ENCODE measurements at regions of chr19 and their contacts with region 1.

Region 1: GRCh38 chr19:47013041-47013517 is 6.6 kb upstream of the NPAS1 start:
- DNase-seq: peak; percentile 78
- H3K4me3 ChIP-seq: no peak overlapping the region
- H3K27ac ChIP-seq: no peak overlapping the region
- H3K4me1 ChIP-seq: peaks cover 11% of the 10 kb centered on the region
- H3K27me3 ChIP-seq: no peaks in the 10 kb centered on the region
- CTCF ChIP-seq: peak; percentile 93 to 98

Region 2: DNA sequence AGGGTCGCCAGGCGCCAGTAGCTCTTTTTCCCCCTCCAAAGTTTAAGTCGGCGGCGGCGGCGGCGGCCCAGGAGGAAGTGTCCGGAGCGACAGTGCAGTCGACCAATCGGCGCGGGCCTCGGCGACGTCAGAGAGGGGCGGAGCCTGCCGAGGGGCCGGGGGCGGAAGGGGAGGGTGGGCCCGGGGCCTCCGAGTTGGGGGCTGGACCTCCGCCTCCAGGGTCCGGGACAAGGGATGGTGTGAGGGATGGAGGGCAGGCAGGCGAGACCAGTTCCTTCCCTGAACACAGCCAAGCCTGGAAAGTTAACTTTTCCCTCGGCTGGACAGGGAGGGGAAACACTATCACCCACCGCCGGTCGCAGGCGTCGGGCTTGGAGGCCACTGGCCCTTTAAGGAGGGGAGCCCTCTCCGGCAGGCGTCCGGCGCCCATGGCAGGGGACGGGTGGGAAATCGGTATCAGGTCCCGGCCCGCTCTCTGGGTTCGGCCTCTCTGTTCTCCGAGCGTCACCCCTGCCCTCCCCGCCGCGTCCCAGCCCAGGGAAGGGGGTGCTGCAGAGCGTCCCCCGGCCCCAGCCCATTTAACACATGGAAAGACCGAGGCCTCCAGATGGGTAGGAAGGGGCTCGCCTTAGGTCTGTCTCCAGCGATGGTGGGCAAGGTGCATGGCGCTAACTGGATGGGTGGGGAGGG is 295.9 kb before region 1 on chr19 and contains the start of gene PRKD2:
- CTCF ChIA-PET with region 1: interaction called, 11 read pairs
- dilution Hi-C with region 1: no loop called
- in situ Hi-C with region 1: no loop called
- intact Hi-C with region 1: no loop called
- DNase-seq: peak; percentile 72
- H3K4me3 ChIP-seq: peak within 1 kb of the TSS; percentile 59 to 91 (median 63)
- H3K27ac ChIP-seq: peak within 1 kb of the TSS; percentile 82
- H3K4me1 ChIP-seq: peaks cover 32% of the 10 kb centered on the region
- H3K27me3 ChIP-seq: no peaks in the 10 kb centered on the region
- CTCF ChIP-seq: no peak
- total RNA-seq, gene PRKD2: 20.2 to 55.5 TPM

Region 3: GRCh38 chr19:47035127-47036096 is 22.3 kb after region 1 on chr19:
- CTCF ChIA-PET with region 1: no interaction called
- dilution Hi-C with region 1: no loop called
- in situ Hi-C with region 1: no loop called
- intact Hi-C with region 1: loop called (anchors 1 kb)
- DNase-seq: peak; percentile 90
- H3K4me3 ChIP-seq: peak overlapping the region; percentile 47 to 79 (median 53)
- H3K27ac ChIP-seq: peak overlapping the region; percentile 68
- H3K4me1 ChIP-seq: peaks cover 14% of the 10 kb centered on the region
- H3K27me3 ChIP-seq: no peaks in the 10 kb centered on the region
- CTCF ChIP-seq: peak; percentile 80 to 94

Region 4: GRCh38 chr19:47075179-47075810 is 62.2 kb after region 1 on chr19:
- CTCF ChIA-PET with region 1: no interaction called
- dilution Hi-C with region 1: no loop called
- in situ Hi-C with region 1: no loop called
- intact Hi-C with region 1: loop called (anchors 1 kb)
- DNase-seq: no peak
- H3K4me3 ChIP-seq: no peak overlapping the region
- H3K27ac ChIP-seq: no peak overlapping the region
- H3K4me1 ChIP-seq: peaks cover 2% of the 10 kb centered on the region
- H3K27me3 ChIP-seq: no peaks in the 10 kb centered on the region
- CTCF ChIP-seq: no peak

Measured in mammary epithelial cell (primary cell).